ENCODE measurements at regions of chr6 and their contacts with region 1.

Region 1: GRCh38 chr6:5698318-5698717 is 308.4 kb downstream of the NRN1 start:
- DNase-seq: no peak
- ATAC-seq: no peak
- H3K4me3 Mint-ChIP-seq: no peak overlapping the region
- H3K27ac Mint-ChIP-seq: peak overlapping the region; percentile 26
- H3K4me1 Mint-ChIP-seq: peaks cover 39% of the 10 kb centered on the region
- H3K27me3 Mint-ChIP-seq: no peaks in the 10 kb centered on the region
- CTCF ChIP-seq: no peak

Region 2: GRCh38 chr6:5712349-5713215 is 14.3 kb after region 1 on chr6:
- CTCF ChIA-PET with region 1: no interaction called
- POLR2A ChIA-PET with region 1: interaction called, 3 read pairs
- intact Hi-C with region 1: loop called (anchors 2 kb)
- DNase-seq: no peak
- ATAC-seq: no peak
- H3K4me3 Mint-ChIP-seq: no peak overlapping the region
- H3K27ac Mint-ChIP-seq: no peak overlapping the region
- H3K4me1 Mint-ChIP-seq: peaks cover 17% of the 10 kb centered on the region
- H3K27me3 Mint-ChIP-seq: no peaks in the 10 kb centered on the region
- CTCF ChIP-seq: no peak

Measured in activated B cell treated with CpG ODN at 0.5 μM for 24 hours (primary cell).